CD4-positive, alpha-beta T cell (primary cell): ENCODE measurements at regions of chr22 and their contacts with region 1.

Region 1: GRCh38 chr22:37457093-37457893 is 28.9 kb downstream of the MFNG start:
- DNase-seq: peak; percentile 74 to 90 (median 85)
- ATAC-seq: peak; percentile 98
- H3K4me3 ChIP-seq: no peak overlapping the region
- H3K4me3 Mint-ChIP-seq: no peak overlapping the region
- H3K27ac ChIP-seq: no peak overlapping the region
- H3K27ac Mint-ChIP-seq: no peak overlapping the region
- H3K4me1 ChIP-seq: peaks cover 5% of the 10 kb centered on the region
- H3K4me1 Mint-ChIP-seq: peaks cover 6% of the 10 kb centered on the region
- H3K27me3 ChIP-seq: no peaks in the 10 kb centered on the region
- H3K27me3 Mint-ChIP-seq: no peaks in the 10 kb centered on the region
- CTCF ChIP-seq: peak; percentile 92

Region 2: GRCh38 chr22:37387793-37388192 is 69.5 kb before region 1 on chr22:
- CTCF ChIA-PET with region 1: no interaction called
- POLR2A ChIA-PET with region 1: no interaction called
- intact Hi-C with region 1: loop called in 1 of 2 experiments (anchors 2 kb)
- DNase-seq: no peak
- ATAC-seq: no peak
- H3K4me3 ChIP-seq: no peak overlapping the region
- H3K4me3 Mint-ChIP-seq: no peak overlapping the region
- H3K27ac ChIP-seq: no peak overlapping the region
- H3K27ac Mint-ChIP-seq: no peak overlapping the region
- H3K4me1 ChIP-seq: no peaks in the 10 kb centered on the region
- H3K4me1 Mint-ChIP-seq: no peaks in the 10 kb centered on the region
- H3K27me3 ChIP-seq: no peaks in the 10 kb centered on the region
- H3K27me3 Mint-ChIP-seq: peaks cover 4% of the 10 kb centered on the region
- CTCF ChIP-seq: no peak

Region 3: DNA sequence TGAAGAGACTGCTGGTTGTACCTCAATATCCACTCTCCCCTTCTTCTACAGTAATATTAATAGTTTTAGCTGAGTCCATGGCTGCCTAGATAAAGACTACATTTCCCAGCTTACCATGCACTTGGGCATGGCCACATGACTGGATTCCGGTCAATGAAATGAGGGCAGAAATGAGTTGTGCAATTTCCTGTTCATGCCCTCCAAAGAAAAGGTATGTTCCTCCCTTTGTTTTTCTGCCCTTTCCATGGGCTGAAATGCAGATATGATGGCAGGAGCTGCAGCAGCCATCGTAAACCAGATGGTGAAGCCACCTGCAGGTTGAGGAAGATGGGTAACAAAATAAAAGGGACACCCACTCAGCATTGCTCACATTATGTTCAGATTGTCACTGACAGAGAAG is 14.8 kb before region 1 on chr22:
- CTCF ChIA-PET with region 1: no interaction called
- POLR2A ChIA-PET with region 1: no interaction called
- intact Hi-C with region 1: no loop called
- DNase-seq: no peak
- ATAC-seq: no peak
- H3K4me3 ChIP-seq: no peak overlapping the region
- H3K4me3 Mint-ChIP-seq: no peak overlapping the region
- H3K27ac ChIP-seq: no peak overlapping the region
- H3K27ac Mint-ChIP-seq: no peak overlapping the region
- H3K4me1 ChIP-seq: no peaks in the 10 kb centered on the region
- H3K4me1 Mint-ChIP-seq: no peaks in the 10 kb centered on the region
- H3K27me3 ChIP-seq: no peaks in the 10 kb centered on the region
- H3K27me3 Mint-ChIP-seq: peaks cover 5% of the 10 kb centered on the region
- CTCF ChIP-seq: no peak

Region 4: DNA sequence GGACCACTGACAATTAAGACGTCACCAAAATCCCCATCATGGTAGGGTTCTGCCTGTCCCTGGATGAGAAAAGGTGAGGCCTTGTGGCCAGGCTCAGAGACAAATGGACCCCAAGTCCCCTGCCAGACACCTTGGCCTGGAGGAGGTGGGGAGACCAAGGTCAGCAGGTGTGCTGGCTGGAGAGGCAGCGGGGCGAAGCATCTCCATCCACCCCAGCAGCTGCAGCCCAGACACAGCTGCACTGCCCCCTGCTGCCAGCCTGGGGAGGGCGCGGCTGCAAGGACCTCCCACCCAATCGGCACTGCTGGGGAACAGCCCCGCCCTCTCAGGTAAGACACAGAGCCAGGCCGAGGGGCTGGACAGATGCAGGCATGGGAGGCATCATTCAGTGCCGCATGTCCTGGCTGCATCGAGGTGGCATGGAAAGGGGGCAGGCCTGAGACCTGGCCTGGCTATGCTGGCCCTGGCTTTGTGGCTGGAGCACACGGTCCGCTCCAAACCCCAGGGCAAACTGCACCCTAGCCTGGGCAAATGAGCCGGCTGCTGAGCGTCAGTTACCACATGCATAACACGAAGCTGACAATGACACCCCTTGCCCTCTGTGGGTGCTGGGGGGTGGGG is 41.1 kb after region 1 on chr22:
- CTCF ChIA-PET with region 1: no interaction called
- POLR2A ChIA-PET with region 1: no interaction called
- intact Hi-C with region 1: loop called in 1 of 2 experiments (anchors 5 kb)
- DNase-seq: peak; percentile 56 to 88 (median 72)
- ATAC-seq: peak; percentile 99
- H3K4me3 ChIP-seq: no peak overlapping the region
- H3K4me3 Mint-ChIP-seq: no peak overlapping the region
- H3K27ac ChIP-seq: no peak overlapping the region
- H3K27ac Mint-ChIP-seq: no peak overlapping the region
- H3K4me1 ChIP-seq: peaks cover 30% of the 10 kb centered on the region
- H3K4me1 Mint-ChIP-seq: peaks cover 28% of the 10 kb centered on the region
- H3K27me3 ChIP-seq: no peaks in the 10 kb centered on the region
- H3K27me3 Mint-ChIP-seq: no peaks in the 10 kb centered on the region
- CTCF ChIP-seq: peak; percentile 76